Panc1 (cell line): ENCODE measurements at regions of chr14 and their contacts with region 1.

Region 1: GRCh38 chr14:24366721-24367513 is 1.1 kb upstream of the NFATC4 start:
- DNase-seq: no peak
- ATAC-seq: peak; percentile 79
- H3K4me3 ChIP-seq: peak overlapping the region; percentile 35 to 53
- H3K27ac ChIP-seq: 0 out of 2 replicates have a peak overlapping the region, but pooled peaks have one; percentile 23
- H3K4me1 ChIP-seq: peaks cover 6% of the 10 kb centered on the region
- H3K27me3 ChIP-seq: no peaks in the 10 kb centered on the region
- CTCF ChIP-seq: no peak

Region 2: DNA sequence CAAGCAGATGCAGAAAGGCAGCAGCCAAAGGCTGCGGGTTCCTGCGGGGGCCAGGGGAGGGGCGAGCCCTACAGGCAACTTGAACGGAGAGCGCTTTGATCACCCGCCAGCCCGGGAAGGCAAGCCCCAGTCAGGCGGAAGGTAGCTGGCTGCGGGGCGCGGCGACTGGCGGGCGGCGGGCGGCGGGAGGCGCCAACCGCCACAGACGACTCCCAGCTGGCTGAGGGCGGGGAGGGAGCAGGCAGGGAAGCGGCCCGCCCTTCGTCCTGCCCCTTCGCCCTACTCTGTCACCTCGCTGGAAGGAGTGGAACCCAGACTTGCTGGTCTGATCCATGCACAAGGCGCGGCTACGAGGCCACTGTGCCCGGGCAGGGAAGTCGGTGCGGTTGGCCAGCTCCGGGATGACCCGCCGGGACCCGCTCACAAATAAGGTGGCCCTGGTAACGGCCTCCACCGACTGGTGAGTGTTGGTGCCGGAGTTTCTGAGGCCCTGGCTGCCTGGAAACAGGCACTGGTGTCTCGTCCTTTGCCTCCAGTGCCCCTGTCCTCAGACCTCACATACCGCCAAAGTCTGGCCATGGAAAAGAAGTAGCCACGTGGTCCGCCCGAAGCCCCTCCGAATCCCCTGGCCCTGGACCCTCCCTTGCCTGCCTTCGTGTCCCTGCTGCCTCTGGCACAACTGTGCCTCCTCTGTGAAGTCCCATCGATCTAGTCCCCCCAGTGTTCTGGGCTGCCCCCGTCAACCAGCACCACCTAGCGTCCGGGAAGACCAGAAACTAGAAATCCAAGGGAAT is 330.6 kb before region 1 on chr14:
- CTCF ChIA-PET with region 1: no interaction called
- POLR2A ChIA-PET with region 1: no interaction called
- in situ Hi-C with region 1: no loop called
- intact Hi-C with region 1: no loop called
- DNase-seq: no peak
- ATAC-seq: peak; percentile 98
- H3K4me3 ChIP-seq: peak overlapping the region; percentile 48 to 57
- H3K27ac ChIP-seq: peak overlapping the region; percentile 54; the same call in 1 of the 2 replicates
- H3K4me1 ChIP-seq: no peaks in the 10 kb centered on the region
- H3K27me3 ChIP-seq: no peaks in the 10 kb centered on the region
- CTCF ChIP-seq: peak; percentile 85

Region 3: DNA sequence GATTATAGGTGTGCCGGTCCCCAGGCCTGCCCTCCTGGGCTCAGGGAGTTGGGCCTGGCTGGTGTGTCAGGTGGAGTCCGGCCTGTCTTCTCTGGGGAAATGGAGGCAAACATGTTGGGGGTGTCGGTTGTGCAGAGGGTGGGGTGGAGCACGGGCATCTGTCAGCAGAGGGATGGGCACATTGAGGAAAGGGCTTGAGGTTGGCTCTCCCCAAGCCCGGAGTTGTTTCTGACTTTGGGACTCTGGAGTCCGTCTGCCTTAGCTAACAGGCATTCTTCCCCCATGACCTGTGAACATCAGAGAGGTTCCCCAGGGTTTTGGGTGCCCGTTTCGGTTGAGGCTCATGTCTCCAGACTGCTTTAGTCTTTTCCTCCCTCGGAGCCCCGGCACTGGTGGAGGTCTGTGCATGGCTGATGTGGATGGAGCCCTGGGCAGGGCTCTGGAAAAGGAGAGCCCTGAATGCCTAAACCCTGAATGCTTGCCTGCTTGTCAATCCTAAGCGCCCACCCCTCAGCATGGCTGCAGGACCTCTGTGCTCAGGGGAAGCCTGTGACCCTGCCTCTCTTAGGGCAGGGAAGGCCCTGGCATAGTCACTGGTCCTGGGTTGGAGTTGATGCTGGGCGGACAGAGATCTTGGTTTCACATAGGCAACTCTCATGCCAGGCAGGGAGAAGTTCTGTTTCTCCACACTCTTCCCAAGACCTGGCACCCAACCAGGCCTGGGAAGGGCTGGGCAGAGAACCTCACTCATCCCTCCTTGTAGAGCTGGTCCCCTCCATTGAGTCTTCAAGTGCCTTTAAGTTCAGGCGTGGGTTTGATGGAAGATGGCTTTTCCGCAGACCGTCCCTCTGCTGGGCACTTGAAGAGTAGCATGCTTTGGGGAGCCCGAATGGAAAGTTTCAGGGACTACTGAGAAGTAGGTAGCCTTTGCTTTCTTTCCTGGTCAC is 44.8 kb after region 1 on chr14:
- CTCF ChIA-PET with region 1: interaction called, 4 read pairs
- POLR2A ChIA-PET with region 1: no interaction called
- in situ Hi-C with region 1: no loop called
- intact Hi-C with region 1: loop called (anchors 1 kb)
- DNase-seq: no peak
- ATAC-seq: peak; percentile 83
- H3K4me3 ChIP-seq: no peak overlapping the region
- H3K27ac ChIP-seq: no peak overlapping the region
- H3K4me1 ChIP-seq: no peaks in the 10 kb centered on the region
- H3K27me3 ChIP-seq: no peaks in the 10 kb centered on the region
- CTCF ChIP-seq: peak; percentile 76